Activated CD4-positive, alpha-beta T cell treated with anti-CD3 and anti-CD28 coated beads for 36 hours (primary cell): ENCODE measurements at regions of chr5 and their contacts with region 1.

Region 1: DNA sequence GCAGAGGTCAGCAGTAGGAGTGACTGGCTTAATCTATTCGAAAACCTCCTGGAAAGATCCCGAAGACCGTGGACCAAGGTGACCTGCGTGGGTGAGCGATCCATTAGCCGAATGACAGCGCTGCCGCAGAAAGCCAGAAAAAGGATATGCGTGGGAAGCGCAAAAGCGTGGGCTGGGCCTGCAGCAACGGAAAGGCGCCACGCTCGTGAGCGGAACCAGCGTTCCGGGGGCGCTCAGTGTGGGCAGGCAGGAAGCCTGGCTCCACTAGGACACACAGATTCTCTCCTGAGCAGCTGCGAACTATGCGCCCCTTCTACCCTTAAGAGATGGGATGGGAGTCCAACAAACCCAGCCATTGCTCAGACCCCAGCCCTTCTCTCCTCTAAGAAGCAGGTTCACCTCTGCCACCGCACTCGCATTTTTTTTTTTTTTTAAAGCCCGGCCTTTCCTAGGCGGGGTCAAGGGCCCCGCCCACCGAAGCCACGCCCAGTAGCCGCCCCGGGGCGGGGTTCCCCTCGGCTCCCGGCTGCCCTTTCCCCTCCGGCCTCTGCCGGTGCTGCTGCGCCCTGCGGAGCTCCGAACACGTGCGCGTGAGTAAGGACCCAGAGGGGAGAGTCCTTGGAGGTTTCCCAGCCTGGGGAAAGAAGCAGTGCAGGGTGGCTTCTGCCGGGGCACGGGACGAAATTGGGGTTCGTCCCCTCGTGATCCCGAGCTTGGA is 19.8 kb upstream of the MATR3 start:
- DNase-seq: peak; percentile 95
- ATAC-seq: peak; percentile 90
- H3K4me3 Mint-ChIP-seq: peak overlapping the region; percentile 95
- H3K27ac Mint-ChIP-seq: peak overlapping the region; percentile 88
- H3K4me1 Mint-ChIP-seq: peaks cover 54% of the 10 kb centered on the region
- H3K27me3 Mint-ChIP-seq: no peaks in the 10 kb centered on the region

Region 2: DNA sequence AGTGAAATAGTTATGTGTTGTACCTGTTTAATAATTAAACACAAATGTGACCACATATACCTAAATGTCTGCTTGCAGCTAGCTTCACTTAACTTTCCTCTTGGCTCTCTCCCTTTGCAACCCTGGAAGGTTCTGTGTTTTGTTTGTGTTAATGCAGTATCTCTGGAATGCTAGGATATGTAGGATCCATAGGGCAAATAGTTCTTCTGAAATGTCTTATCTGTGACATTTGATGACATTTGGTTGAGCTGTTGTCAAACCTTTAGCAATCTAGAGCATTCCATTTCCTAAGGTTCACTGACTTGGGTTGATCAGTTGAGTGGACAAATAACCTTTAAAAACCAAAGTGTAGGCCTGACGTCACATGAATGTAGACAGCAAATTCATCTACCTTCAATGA is 498.7 kb before region 1 on chr5:
- CTCF ChIA-PET with region 1: no interaction called
- POLR2A ChIA-PET with region 1: no interaction called
- intact Hi-C with region 1: no loop called
- DNase-seq: no peak
- ATAC-seq: no peak
- H3K4me3 Mint-ChIP-seq: no peak overlapping the region
- H3K27ac Mint-ChIP-seq: no peak overlapping the region
- H3K4me1 Mint-ChIP-seq: no peaks in the 10 kb centered on the region
- H3K27me3 Mint-ChIP-seq: peaks cover 4% of the 10 kb centered on the region

Region 3: GRCh38 chr5:139197710-139198669 is 75.7 kb before region 1 on chr5 and contains the start of gene SIL1:
- CTCF ChIA-PET with region 1: no interaction called
- POLR2A ChIA-PET with region 1: no interaction called
- intact Hi-C with region 1: loop called (anchors 1 to 5 kb)
- DNase-seq: peak; percentile 98
- ATAC-seq: peak; percentile 100
- H3K4me3 Mint-ChIP-seq: peak within 1 kb of the TSS; percentile 90
- H3K27ac Mint-ChIP-seq: peak within 1 kb of the TSS; percentile 97
- H3K4me1 Mint-ChIP-seq: peaks cover 18% of the 10 kb centered on the region
- H3K27me3 Mint-ChIP-seq: peaks cover 2% of the 10 kb centered on the region
- total RNA-seq, gene SIL1: 11.2 to 14.4 TPM

Region 4: GRCh38 chr5:139287890-139288635 is 14.3 kb after region 1 on chr5:
- CTCF ChIA-PET with region 1: interaction called, 6 read pairs
- POLR2A ChIA-PET with region 1: interaction called, 13 read pairs
- intact Hi-C with region 1: loop called (anchors 1 to 2 kb)
- DNase-seq: no peak
- ATAC-seq: peak; percentile 31
- H3K4me3 Mint-ChIP-seq: no peak overlapping the region
- H3K27ac Mint-ChIP-seq: no peak overlapping the region
- H3K4me1 Mint-ChIP-seq: peaks cover 3% of the 10 kb centered on the region
- H3K27me3 Mint-ChIP-seq: no peaks in the 10 kb centered on the region

Region 5: DNA sequence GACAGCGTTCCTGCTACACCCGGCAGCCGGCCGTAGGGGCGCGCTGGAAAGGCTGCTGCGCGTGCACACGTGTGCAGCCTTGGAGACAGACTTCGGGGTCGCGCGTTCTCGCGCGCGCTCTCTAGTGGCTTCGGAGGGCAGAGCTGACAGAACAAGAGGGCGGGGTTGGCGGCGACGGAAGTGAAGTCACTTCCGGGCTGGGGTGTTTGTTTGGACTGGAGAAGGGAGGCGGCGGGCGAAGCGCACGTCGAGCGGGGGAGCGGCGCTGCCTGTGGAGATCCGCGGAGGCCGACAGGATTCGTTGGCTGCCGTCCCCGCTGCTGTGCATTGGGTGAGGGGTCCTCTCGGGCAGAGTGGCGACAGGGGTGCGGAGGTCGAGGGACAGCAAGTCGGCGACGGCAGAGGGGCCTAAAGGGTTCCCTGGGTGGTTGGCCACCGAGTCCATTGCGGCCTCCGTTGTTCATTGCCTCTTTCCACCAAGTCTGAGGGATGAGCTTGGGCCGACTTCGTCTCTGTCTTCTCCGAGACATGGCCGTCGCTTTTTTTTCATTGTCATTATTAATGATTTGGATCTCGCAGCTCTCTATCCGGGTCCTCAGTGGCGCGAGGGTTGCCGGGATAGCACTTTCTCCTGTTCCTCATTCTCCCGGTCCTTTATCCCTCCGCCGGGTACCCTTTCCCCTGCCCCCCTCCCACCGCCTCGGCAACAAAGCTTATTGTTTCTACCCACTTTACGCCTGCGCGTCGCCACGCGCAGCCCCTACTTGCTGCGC is 68.1 kb after region 1 on chr5 and contains the start of gene PAIP2:
- CTCF ChIA-PET with region 1: interaction called, 3 read pairs
- POLR2A ChIA-PET with region 1: interaction called, 3 read pairs
- intact Hi-C with region 1: loop called (anchors 1 kb)
- DNase-seq: peak; percentile 99
- ATAC-seq: peak; percentile 88
- H3K4me3 Mint-ChIP-seq: peak within 1 kb of the TSS; percentile 88
- H3K27ac Mint-ChIP-seq: peak within 1 kb of the TSS; percentile 94
- H3K4me1 Mint-ChIP-seq: peaks cover 53% of the 10 kb centered on the region
- H3K27me3 Mint-ChIP-seq: no peaks in the 10 kb centered on the region
- total RNA-seq, gene PAIP2: 101 to 126 TPM

Region 6: GRCh38 chr5:139523635-139524445 is 250.1 kb after region 1 on chr5:
- CTCF ChIA-PET with region 1: no interaction called
- POLR2A ChIA-PET with region 1: no interaction called
- intact Hi-C with region 1: no loop called
- DNase-seq: no peak
- ATAC-seq: no peak
- H3K4me3 Mint-ChIP-seq: no peak overlapping the region
- H3K27ac Mint-ChIP-seq: no peak overlapping the region
- H3K4me1 Mint-ChIP-seq: peaks cover 2% of the 10 kb centered on the region
- H3K27me3 Mint-ChIP-seq: no peaks in the 10 kb centered on the region

Region 7: DNA sequence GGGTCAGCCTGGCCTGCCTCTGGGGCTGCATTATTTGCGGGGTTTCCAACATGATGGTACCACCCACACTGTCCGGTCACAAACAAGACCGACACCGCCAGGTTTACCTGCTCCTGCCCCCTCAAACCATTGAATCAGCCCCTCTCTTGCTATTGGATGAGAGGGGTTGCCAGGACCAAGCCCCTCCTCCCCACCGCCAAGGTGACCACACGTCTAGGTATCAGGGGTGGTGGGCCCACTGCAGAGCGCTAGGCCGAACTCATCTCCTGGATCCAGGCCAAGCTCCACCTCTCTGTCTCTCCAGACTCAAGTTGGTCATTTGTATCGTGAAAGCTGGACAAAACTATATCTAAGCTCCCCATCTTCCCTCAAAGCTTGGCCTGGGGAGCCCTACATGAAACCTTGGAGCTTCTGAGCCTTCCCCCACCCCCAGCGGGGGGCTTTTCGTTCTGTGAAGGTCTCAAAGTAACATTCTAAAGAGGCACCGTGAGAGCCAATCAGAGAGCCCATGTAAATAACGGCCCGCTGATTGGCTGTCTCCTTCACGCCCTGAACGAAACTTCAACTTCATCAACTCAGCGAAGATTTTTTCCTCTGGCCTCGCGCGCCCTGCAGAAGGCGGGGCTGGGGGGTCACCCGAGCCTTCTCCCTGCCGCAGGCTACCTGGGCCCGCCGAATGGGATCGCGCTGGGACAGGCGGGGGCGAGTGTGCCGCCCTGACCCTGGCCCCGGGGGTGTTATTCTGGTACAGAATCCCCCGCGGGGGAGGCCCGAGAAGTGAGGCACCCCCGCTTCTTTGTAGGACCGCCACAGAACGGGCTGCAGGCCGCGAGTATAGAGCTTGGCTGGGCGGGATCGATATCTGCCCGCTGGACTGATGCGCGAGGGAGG is 472.3 kb after region 1 on chr5:
- CTCF ChIA-PET with region 1: no interaction called
- POLR2A ChIA-PET with region 1: no interaction called
- intact Hi-C with region 1: loop called in 1 of 2 experiments (anchors 5 kb)
- DNase-seq: peak; percentile 70
- ATAC-seq: peak; percentile 27
- H3K4me3 Mint-ChIP-seq: peak overlapping the region; percentile 60
- H3K27ac Mint-ChIP-seq: no peak overlapping the region
- H3K4me1 Mint-ChIP-seq: peaks cover 29% of the 10 kb centered on the region
- H3K27me3 Mint-ChIP-seq: peaks cover 16% of the 10 kb centered on the region